ENCODE measurements at regions of chr1 and their contacts with region 1.

Region 1: DNA sequence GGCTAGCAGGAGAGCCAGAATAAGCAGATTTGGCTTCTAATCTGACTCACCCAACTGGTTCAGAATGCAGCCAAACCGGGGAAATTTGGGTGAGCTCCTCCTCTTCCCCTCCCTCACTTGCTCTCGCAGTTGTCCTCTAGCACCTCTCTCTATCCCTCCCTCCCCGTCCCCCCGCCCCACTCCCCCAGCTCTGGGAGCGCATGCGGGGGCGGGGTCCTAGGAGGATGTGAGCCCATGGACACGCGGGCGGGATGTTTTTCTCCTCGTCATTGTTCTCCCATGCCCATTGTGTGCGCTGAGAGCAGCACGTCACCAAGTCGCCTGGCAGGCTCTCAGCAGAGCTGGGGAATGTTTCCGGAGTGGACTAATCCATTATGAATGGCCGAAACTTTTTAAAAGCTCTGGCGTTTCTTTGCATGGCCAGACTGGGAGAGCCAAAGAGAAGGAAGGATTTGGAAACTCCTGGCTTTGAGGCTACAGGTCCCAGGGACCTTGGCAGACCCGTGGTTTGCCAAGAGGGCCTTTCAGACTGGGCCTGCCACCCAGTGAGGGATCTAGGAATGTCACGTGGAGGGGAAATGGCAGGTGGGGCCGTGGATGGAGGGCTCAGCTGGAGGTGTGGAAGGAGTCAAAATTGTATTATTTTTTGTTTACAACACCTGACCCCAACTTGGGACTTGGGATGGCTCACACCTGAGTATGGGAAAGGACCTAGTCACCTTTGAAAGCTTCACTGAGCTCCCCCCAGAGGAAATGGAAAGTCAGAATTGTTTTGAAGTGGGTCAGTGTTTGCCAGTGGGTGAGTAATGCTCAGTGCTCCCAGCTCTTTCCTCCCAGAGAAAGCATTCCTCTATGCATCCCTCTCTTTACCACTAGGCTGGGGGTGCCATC is 39.2 kb downstream of the CDK18 start:
- DNase-seq: peak; percentile 83
- ATAC-seq: peak; percentile 85

Region 2: DNA sequence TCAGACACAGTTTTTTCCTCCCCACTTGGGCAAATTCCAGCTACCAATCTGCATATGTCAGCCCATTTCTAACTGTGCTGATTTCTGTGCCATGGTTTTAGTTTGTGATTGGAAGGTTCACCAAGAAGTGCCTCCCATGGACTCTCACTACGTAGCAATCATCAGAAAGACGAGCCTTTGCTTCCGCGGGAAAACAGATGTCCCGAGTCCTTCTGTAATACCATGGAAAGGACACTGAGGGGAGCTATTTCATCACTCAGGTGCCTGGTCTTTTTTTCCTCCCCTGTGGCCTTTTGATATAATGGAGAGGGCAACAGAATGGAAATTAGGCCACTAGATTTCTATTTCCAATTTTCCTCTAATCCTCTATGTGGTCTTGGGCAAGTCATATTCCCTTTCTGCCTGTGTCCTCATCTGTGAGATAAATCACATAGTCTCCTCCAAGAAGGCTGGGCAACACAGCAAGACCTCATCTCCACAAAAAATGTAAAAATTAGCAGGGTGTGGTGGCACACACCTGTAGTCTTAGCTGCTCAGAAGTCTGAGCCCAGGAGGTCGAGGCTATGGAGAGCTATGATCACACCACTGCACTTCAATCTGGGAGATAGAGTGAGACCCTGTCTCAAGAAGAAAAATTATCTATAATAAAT is 146.6 kb before region 1 on chr1:
- intact Hi-C with region 1: no loop called
- DNase-seq: no peak
- ATAC-seq: peak; percentile 79

Region 3: GRCh38 chr1:205584732-205585131 is 41.1 kb after region 1 on chr1:
- intact Hi-C with region 1: loop called (anchors 5 kb)
- DNase-seq: no peak
- ATAC-seq: no peak

Region 4: DNA sequence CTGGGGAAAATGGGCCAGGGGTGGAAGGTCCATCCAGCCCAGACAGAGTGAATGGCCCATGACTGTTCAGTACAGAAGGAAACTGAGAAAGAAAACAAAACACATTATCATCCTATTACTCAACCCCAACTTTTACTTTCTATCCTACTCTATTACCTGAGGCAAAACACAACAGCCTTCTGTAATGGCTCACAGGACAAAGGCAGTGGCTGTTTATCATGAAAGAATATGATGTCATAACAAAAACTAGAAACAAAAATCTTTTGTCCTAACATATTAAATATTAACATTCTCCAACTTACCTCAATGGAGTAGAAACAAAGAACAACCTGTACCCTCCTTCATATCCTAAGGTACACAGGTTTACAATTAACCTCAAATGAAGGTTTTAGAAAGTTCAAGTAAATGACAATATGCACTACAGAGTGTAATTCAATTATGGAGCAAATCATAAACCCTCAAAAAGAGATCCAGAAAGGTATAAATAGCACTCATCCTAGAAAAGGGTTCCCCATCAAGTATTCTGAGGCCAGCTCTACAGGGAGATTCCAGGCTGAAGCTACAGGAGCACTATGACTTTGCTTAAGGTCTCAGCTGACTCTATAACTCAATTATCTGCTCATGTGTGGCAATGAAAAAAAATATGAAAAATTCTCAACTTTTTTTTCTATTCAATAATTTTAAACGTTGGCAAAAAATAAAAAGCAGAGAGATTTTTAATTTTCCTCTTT is 73.1 kb after region 1 on chr1:
- intact Hi-C with region 1: no loop called
- DNase-seq: no peak
- ATAC-seq: no peak

Measured in Right ventricle myocardium inferior (tissue), 1 donor.